ENCODE measurements at regions of chr3 and their contacts with region 1.

Region 1: DNA sequence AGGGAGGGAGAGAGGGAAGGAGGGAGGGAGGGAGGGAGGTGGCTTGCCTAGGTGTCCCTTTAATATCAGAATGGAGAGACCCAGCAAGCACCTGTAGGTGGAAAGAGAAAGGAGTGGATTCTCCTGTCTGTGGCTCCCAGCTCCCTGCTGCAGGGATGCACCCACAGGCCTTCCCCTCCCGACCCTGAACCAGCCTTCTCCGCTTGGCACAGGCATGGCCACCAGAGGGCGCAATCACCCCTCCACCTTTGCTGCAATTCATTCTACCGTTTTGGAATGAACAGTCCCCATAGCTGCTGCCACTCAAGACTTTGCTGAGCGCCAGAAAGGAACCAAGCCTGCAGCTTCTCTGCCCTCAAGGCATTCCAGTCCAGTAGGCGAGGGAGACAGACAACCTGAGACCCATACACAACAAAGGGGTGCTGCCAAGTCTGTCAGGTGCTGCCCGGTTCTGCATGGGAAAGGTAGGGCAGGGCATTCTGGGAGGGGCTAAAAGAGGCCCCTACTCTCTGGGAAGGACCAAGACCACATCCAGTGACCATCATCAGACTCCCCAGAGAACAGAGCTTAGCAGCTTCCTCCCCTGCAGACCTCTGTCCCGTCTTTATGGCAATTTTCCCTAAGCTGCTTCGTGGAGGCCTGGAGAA is 4.9 kb downstream of the TLR9 start:
- DNase-seq: peak; percentile 89
- H3K4me3 ChIP-seq: no peak overlapping the region
- H3K27ac ChIP-seq: no peak overlapping the region
- H3K4me1 ChIP-seq: peaks cover 16% of the 10 kb centered on the region
- H3K27me3 ChIP-seq: no peaks in the 10 kb centered on the region
- CTCF ChIP-seq: peak; percentile 63 to 95 (median 89)
- POLR2A ChIP-seq: no peak

Region 2: DNA sequence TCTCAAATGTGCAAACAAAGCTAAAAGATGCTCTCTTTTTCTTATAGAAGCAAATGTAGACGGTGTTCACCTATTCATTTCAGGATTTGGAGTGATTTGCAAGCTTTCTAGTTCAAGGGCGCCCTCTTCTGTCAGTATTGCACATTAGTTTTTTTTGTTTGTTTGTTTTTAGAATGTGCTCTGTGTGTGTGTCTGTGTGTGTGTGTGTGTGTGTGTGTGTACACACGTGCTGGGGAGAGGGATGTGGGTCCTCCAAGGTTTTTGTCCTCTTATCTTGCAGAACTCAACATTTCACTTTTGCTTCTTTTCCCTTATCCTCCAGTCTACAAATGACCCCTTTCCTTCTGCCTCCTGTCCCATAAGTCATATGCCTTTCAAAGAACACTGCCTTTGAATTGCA is 119.1 kb after region 1 on chr3:
- intact Hi-C with region 1: loop called (anchors 5 kb)
- DNase-seq: peak; percentile 51
- H3K4me3 ChIP-seq: no peak overlapping the region
- H3K27ac ChIP-seq: no peak overlapping the region
- H3K4me1 ChIP-seq: peaks cover 4% of the 10 kb centered on the region
- H3K27me3 ChIP-seq: no peaks in the 10 kb centered on the region
- CTCF ChIP-seq: peak; percentile 60 to 73 (median 61)
- POLR2A ChIP-seq: no peak

Region 3: GRCh38 chr3:52444860-52445793 is 224.6 kb after region 1 on chr3 and contains the start of gene SEMA3G:
- intact Hi-C with region 1: no loop called
- DNase-seq: peak; percentile 82
- H3K4me3 ChIP-seq: no peak within 1 kb of the TSS
- H3K27ac ChIP-seq: no peak within 1 kb of the TSS
- H3K4me1 ChIP-seq: peaks cover 4% of the 10 kb centered on the region
- H3K27me3 ChIP-seq: no peaks in the 10 kb centered on the region
- CTCF ChIP-seq: peak; percentile 14 to 50 (median 38)
- POLR2A ChIP-seq: no peak
- total RNA-seq, gene SEMA3G: 1.7 to 2.1 TPM